Caco-2 (cell line): ENCODE measurements at regions of chr12 and their contacts with region 1.

Region 1: DNA sequence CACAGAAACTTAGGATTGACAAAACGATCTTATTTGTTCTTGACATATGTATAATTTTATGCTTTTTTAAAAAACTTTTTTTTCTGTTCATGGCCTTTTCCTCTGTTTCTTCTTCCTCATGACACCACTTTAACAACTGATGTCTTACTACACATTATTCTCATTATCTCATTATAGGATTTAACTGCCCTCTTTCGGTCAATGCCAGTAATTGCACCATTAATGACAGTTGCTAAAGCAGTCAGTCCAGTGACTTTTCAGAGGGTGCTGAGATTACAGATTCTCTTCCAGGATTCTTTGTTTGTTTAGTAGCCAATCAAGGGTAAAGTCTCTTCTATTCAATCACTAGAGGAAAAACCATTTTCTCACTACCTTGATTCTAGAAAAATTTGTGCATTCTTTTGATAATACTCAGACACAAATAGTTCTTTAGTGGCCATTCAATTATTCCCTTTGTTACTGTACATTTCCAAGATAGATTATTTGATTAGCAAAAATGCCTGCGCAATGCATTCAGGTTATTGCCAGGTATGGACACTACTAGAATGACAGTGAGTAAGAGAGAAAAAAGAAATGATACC is 50.1 kb downstream of the KLRG1 start:
- DNase-seq: peak in 1 of 2 experiments; percentile 55
- H3K4me3 ChIP-seq: no peak overlapping the region
- H3K4me3 Mint-ChIP-seq: no peak overlapping the region
- H3K27ac Mint-ChIP-seq: no peak overlapping the region
- H3K4me1 ChIP-seq: no peaks in the 10 kb centered on the region
- H3K4me1 Mint-ChIP-seq: no peaks in the 10 kb centered on the region
- H3K27me3 ChIP-seq: 0 out of 2 replicates have a peak, but pooled peaks cover 1% of the 10 kb centered on the region
- H3K27me3 Mint-ChIP-seq: peaks cover 14% of the 10 kb centered on the region
- CTCF ChIP-seq: peak; percentile 70 to 89

Region 2: DNA sequence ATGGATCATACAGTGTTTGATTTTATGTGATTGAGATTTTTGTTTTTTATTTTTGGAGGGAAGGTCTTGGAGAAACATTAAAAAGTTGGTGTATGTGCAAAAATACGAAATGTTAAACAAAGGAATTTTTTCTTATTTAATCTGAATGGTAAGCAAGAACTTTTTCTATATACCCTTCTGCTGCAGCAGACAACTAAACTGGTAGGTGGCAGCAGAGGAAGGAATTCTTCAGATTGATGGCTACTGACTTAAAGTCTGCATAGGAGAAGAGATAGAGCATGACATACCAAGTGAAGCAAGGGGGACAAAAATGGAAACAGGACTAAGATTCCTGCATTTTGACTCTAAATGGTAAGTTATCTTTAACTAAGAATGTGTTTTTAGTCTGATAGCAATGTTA is 259.1 kb before region 1 on chr12:
- CTCF ChIA-PET with region 1: no interaction called
- POLR2A ChIA-PET with region 1: no interaction called
- intact Hi-C with region 1: loop called (anchors 1 kb)
- DNase-seq: peak in 1 of 2 experiments; percentile 57
- H3K4me3 ChIP-seq: no peak overlapping the region
- H3K4me3 Mint-ChIP-seq: no peak overlapping the region
- H3K27ac Mint-ChIP-seq: no peak overlapping the region
- H3K4me1 ChIP-seq: no peaks in the 10 kb centered on the region
- H3K4me1 Mint-ChIP-seq: no peaks in the 10 kb centered on the region
- H3K27me3 ChIP-seq: no peaks in the 10 kb centered on the region
- H3K27me3 Mint-ChIP-seq: peaks cover 6% of the 10 kb centered on the region
- CTCF ChIP-seq: peak; percentile 53 to 60

Region 3: GRCh38 chr12:8914716-8915526 is 124.6 kb before region 1 on chr12:
- CTCF ChIA-PET with region 1: no interaction called
- POLR2A ChIA-PET with region 1: no interaction called
- intact Hi-C with region 1: loop called (anchors 2 kb)
- DNase-seq: peak; percentile 79 to 81
- H3K4me3 ChIP-seq: peak overlapping the region; percentile 49
- H3K4me3 Mint-ChIP-seq: no peak overlapping the region
- H3K27ac Mint-ChIP-seq: no peak overlapping the region
- H3K4me1 ChIP-seq: peaks cover 25% of the 10 kb centered on the region
- H3K4me1 Mint-ChIP-seq: peaks cover 15% of the 10 kb centered on the region
- H3K27me3 ChIP-seq: no peaks in the 10 kb centered on the region
- H3K27me3 Mint-ChIP-seq: no peaks in the 10 kb centered on the region
- CTCF ChIP-seq: no peak